ENCODE measurements at regions of chr4 and their contacts with region 1.

Region 1: DNA sequence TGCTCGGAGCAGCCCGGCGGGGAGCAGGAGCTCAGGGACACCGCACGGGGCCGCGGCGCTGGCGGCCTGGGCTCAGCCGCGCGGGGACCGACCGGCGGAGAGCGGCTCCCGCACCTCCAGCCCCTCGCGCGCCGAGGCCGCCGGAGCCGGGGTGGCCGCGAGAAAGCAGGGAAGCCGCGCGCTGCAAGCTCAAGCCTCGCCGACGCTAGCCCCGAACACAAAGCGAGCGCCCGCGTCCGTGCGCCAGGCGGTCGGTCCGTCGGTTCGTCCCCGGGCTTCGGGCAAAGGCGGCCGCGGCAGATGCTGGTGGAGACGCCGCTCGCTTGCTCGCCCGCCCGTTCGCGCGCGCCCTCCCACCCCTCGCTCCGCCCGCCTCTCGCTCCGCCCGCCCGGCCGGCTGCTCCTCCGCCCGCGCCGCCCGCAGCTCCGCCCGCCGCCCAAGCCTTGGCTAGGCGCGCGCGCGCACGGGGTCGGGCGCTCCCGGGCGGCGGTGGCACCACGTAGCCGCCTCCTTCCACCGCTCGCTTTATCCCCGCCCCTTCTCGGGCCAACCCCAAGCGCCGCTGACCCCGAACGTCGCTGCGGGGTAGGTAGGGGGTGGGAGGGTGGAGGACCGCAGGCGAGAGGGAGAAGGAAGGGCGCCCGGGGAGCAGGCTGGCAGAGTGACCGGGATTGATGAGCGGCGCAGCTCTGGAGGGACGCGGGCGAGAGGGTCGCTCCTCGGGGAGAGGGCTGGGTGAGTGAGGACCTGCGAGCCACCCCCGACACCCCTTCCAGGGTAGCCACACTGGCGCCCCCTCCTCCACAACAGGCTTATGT is at the start of gene TSPAN5:
- DNase-seq: peak; percentile 43 to 88
- H3K4me3 ChIP-seq: peak within 1 kb of the TSS; percentile 73 to 87
- H3K27ac ChIP-seq: peak within 1 kb of the TSS; percentile 82 to 83
- H3K4me1 ChIP-seq: peaks cover 0 to 18% of the 10 kb centered on the region in 2 donors
- H3K27me3 ChIP-seq: no peaks in the 10 kb centered on the region
- CTCF ChIP-seq: no peak
- total RNA-seq, gene TSPAN5: 5.2 TPM

Region 2: DNA sequence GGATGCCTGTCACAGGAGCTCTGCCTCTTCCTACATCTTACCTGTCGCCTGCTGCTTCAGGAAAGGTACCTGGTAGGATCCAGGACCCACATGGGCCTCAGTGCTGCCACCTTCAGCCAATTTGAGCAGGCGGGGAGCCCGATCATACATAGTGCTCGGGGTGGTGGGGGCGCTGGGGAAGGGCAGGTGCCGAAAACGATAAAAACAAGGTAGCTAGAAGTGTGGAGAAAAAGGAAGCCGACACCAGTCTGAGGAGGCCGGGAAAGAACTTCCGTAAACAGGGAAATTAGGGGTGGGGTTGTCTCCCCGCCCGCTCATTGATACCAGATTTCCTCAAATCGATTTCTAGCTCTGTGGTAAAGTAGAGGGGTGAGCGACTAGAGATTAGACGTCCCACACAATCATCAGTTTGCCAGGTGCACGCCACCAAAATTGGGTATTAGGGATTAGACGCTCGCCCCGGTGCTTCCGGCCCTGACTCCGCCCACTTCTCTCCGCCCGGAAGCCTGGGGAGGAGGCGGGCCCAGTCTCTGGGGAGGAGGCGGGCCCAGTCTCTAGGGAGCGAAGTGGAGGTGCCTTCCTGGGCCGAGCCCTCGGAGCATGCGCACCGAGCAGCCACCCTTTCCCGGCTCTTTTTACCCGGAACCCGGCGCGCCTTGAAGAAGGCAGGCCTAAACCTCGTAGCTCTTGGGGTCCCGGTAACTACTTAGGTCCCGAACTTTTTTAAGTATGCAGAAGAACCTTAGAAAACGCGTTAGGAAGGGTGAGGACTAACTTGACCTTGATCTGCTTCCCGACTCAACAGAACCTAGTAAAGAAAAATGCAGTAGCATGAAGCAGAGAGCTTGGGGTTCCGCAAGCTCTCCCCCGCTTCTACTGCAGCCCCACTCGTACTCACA is 515.2 kb before region 1 on chr4 and contains the start of gene STPG2:
- intact Hi-C with region 1: loop called (anchors 5 kb)
- DNase-seq: peak; percentile 64 to 94
- H3K4me3 ChIP-seq: peak within 1 kb of the TSS; percentile 67 to 79
- H3K27ac ChIP-seq: peak within 1 kb of the TSS; percentile 62 to 77
- H3K4me1 ChIP-seq: no peaks in the 10 kb centered on the region
- H3K27me3 ChIP-seq: no peaks in the 10 kb centered on the region
- CTCF ChIP-seq: peak in 2 of 3 experiments; percentile 31 to 36
- total RNA-seq, gene STPG2: not detected

Region 3: GRCh38 chr4:98260579-98261290 is 397.8 kb before region 1 on chr4:
- intact Hi-C with region 1: loop called (anchors 5 kb)
- DNase-seq: peak; percentile 76 to 96
- H3K4me3 ChIP-seq: peak overlapping the region; percentile 94 to 96
- H3K27ac ChIP-seq: peak overlapping the region; percentile 95 to 96
- H3K4me1 ChIP-seq: peaks cover 0 to 6% of the 10 kb centered on the region in 2 donors
- H3K27me3 ChIP-seq: no peaks in the 10 kb centered on the region
- CTCF ChIP-seq: no peak

Region 4: DNA sequence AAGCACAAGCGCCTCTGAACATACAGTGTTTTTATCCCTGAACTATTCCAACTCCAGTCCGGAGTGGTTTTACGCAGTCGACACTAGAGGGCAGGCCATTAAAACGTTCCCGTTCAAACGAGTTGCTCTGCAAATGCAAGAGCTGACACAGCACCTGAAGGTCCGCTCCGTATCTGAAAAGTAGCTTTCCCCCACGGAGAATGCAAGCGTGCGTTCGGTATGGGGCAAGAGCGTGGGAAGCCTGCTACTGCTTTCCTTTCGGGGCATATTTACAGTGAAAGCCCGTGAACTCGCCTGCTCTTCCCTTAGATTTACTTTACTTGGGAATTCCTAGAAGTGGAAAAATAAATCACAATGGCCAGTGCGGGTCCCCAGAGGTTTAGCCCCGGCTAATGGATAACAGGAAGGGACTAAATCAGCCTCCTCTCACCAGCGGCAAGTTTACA is 190.8 kb before region 1 on chr4:
- intact Hi-C with region 1: loop called (anchors 2 kb)
- DNase-seq: peak; percentile 17 to 84
- H3K4me3 ChIP-seq: peak overlapping the region; percentile 42 to 61
- H3K27ac ChIP-seq: no peak overlapping the region
- H3K4me1 ChIP-seq: no peaks in the 10 kb centered on the region
- H3K27me3 ChIP-seq: no peaks in the 10 kb centered on the region
- CTCF ChIP-seq: peak; percentile 61 to 82 (median 79)

Region 5: GRCh38 chr4:98481167-98481566 is 177.3 kb before region 1 on chr4:
- intact Hi-C with region 1: no loop called
- DNase-seq: no peak
- H3K4me3 ChIP-seq: no peak overlapping the region
- H3K27ac ChIP-seq: no peak overlapping the region
- H3K4me1 ChIP-seq: no peaks in the 10 kb centered on the region
- H3K27me3 ChIP-seq: no peaks in the 10 kb centered on the region
- CTCF ChIP-seq: no peak

Region 6: GRCh38 chr4:98626350-98626749 is 32.1 kb before region 1 on chr4:
- intact Hi-C with region 1: loop called (anchors 2 kb)
- DNase-seq: peak in 1 of 2 donors; percentile 78
- H3K4me3 ChIP-seq: no peak overlapping the region
- H3K27ac ChIP-seq: peak overlapping the region; percentile 68 to 72
- H3K4me1 ChIP-seq: peaks cover 0 to 18% of the 10 kb centered on the region in 2 donors
- H3K27me3 ChIP-seq: no peaks in the 10 kb centered on the region
- CTCF ChIP-seq: no peak

Region 7: DNA sequence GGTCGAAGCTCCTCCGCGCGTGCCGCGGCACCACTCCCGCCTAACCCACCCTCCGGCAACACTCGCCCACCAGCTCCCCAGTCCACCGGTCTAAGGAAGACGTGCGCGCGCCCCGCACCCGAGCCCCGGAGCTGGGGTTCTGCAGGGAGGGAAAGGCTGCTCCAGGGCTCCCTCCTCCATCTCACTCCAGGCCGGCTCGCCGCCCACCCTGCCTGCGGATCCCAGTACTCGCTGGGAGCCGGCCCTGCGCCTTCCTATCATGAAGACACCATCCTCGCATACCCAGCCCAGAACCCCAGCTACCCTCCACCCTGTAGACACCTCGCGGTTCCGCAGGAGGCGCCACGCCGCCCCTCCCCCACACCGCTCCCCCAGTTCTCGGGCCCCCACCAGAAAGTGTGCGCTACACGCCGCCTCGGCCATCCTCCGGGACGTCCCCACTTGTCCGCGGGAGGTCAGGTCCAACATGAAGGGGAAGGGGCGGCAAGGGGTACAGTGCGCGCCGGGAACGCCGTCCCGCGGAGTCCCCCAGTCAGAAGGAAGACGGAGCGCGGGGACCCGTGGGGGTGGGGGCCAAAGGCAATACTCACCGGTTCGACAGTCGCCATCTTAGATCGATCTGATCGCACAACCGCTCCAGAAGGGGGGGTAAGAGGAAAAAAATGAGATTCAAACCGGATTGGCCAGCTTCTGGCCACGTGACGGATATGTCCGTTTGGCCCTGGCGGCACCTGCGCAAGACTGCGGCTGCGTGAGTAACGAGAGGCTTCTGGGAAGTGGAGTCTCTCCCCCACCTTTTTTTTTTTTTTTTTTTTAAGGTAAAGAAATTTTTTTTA is 270.2 kb after region 1 on chr4 and contains the start of gene EIF4E:
- intact Hi-C with region 1: loop called (anchors 2 kb)
- DNase-seq: peak; percentile 94 to 98
- H3K4me3 ChIP-seq: peak within 1 kb of the TSS; percentile 84 to 93
- H3K27ac ChIP-seq: peak within 1 kb of the TSS; percentile 92 to 97
- H3K4me1 ChIP-seq: peaks cover 0 to 8% of the 10 kb centered on the region in 2 donors
- H3K27me3 ChIP-seq: no peaks in the 10 kb centered on the region
- CTCF ChIP-seq: peak in 2 of 3 experiments; percentile 23 to 26
- total RNA-seq, gene EIF4E: 6.0 TPM

Region 8: DNA sequence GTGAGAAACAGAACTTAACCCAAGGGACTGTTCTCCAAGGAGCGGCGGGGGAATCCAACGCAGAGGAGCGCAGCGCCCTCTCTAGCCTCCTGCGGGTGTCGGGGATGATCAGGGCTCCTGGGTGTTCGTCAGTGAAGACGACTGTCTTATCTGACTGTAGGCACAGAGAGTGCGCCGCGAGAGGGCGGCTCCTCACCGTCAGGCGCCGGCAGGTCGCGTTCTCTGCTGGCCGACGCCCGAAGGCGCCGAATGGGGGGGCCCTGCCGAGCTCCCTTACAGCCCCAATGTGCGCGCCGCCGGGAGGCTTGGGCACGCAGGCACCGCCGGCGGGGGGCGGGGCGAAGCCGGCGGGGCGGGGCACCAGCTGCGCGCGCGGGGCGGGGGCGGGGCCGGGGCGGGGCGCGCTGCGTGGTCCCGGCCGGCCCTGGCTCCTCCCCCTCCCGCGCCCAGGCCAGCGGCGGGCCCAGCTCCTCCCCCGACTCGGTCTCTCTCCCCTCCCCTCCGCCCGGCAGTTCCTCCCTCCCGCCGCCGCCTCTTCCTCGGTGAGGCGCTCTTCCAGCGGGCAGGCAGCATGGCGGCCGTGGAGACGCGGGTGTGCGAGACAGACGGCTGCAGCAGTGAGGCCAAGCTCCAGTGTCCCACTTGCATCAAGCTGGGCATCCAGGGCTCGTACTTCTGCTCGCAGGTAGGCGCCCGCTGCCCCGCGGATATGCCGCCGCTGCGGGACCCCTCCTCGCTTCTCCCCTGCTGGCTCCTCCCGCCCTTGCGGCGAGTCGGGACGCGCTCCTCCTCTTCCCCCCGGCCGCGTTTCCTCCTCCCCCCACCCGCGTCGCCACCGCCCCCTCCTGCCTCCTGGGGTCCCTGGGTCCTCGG is 336.9 kb after region 1 on chr4 and contains the start of gene METAP1:
- intact Hi-C with region 1: loop called (anchors 10 kb)
- DNase-seq: peak; percentile 82 to 96
- H3K4me3 ChIP-seq: peak within 1 kb of the TSS; percentile 91
- H3K27ac ChIP-seq: peak within 1 kb of the TSS; percentile 81 to 91
- H3K4me1 ChIP-seq: peaks cover 0 to 7% of the 10 kb centered on the region in 2 donors
- H3K27me3 ChIP-seq: no peaks in the 10 kb centered on the region
- CTCF ChIP-seq: peak; percentile 39 to 64 (median 58)
- total RNA-seq, gene METAP1: 53.2 TPM

Measured in ascending aorta (tissue), 2 donors.